Heart right ventricle (tissue), 16 donors: ENCODE measurements at regions of chr4 and their contacts with region 1.

Region 1: GRCh38 chr4:99405433-99406115 is 29.6 kb downstream of the ADH7 start:
- DNase-seq: peak; percentile 12 to 73
- ATAC-seq: peak; percentile 67 to 84 (median 78)
- H3K4me3 ChIP-seq: no peak overlapping the region
- H3K27ac ChIP-seq: peak overlapping the region in 8 of 10 donors; percentile 3 to 67 (median 56)
- H3K4me1 ChIP-seq: peaks cover 0 to 15% (median 8%) of the 10 kb centered on the region in 9 donors
- H3K27me3 ChIP-seq: no peaks in the 10 kb centered on the region
- CTCF ChIP-seq: peak; percentile 79 to 95 (median 94)

Region 2: GRCh38 chr4:98474408-98474844 is 931.1 kb before region 1 on chr4:
- intact Hi-C with region 1: loop called in 3 of 10 experiments (anchors 5 to 10 kb)
- DNase-seq: no peak
- ATAC-seq: no peak
- H3K4me3 ChIP-seq: no peak overlapping the region
- H3K27ac ChIP-seq: no peak overlapping the region
- H3K4me1 ChIP-seq: peaks cover 0 to 5% (median 0%) of the 10 kb centered on the region in 9 donors
- H3K27me3 ChIP-seq: no peaks in the 10 kb centered on the region
- CTCF ChIP-seq: no peak

Region 3: GRCh38 chr4:98928505-98929340 is 476.9 kb before region 1 on chr4 and contains the start of gene EIF4E:
- intact Hi-C with region 1: loop called in 1 of 10 experiments (anchors 1 kb)
- DNase-seq: peak; percentile 97 to 98
- ATAC-seq: peak; percentile 91 to 98 (median 96)
- H3K4me3 ChIP-seq: peak within 1 kb of the TSS; percentile 82 to 97 (median 91)
- H3K27ac ChIP-seq: peak within 1 kb of the TSS; percentile 79 to 96 (median 93)
- H3K4me1 ChIP-seq: peaks cover 0 to 52% (median 24%) of the 10 kb centered on the region in 9 donors
- H3K27me3 ChIP-seq: no peaks in the 10 kb centered on the region
- CTCF ChIP-seq: peak in 6 of 9 donors; percentile 14 to 40 (median 32)
- total RNA-seq, gene EIF4E: 48.7 to 70.4 (median 58.4) TPM

Region 4: DNA sequence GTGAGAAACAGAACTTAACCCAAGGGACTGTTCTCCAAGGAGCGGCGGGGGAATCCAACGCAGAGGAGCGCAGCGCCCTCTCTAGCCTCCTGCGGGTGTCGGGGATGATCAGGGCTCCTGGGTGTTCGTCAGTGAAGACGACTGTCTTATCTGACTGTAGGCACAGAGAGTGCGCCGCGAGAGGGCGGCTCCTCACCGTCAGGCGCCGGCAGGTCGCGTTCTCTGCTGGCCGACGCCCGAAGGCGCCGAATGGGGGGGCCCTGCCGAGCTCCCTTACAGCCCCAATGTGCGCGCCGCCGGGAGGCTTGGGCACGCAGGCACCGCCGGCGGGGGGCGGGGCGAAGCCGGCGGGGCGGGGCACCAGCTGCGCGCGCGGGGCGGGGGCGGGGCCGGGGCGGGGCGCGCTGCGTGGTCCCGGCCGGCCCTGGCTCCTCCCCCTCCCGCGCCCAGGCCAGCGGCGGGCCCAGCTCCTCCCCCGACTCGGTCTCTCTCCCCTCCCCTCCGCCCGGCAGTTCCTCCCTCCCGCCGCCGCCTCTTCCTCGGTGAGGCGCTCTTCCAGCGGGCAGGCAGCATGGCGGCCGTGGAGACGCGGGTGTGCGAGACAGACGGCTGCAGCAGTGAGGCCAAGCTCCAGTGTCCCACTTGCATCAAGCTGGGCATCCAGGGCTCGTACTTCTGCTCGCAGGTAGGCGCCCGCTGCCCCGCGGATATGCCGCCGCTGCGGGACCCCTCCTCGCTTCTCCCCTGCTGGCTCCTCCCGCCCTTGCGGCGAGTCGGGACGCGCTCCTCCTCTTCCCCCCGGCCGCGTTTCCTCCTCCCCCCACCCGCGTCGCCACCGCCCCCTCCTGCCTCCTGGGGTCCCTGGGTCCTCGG is 410.2 kb before region 1 on chr4 and contains the start of gene METAP1:
- intact Hi-C with region 1: loop called in 1 of 10 experiments (anchors 10 kb)
- DNase-seq: peak; percentile 90 to 94
- ATAC-seq: peak; percentile 94 to 98 (median 96)
- H3K4me3 ChIP-seq: peak within 1 kb of the TSS; percentile 73 to 99 (median 96)
- H3K27ac ChIP-seq: peak within 1 kb of the TSS; percentile 86 to 95 (median 93)
- H3K4me1 ChIP-seq: peaks cover 0 to 28% (median 13%) of the 10 kb centered on the region in 9 donors
- H3K27me3 ChIP-seq: no peaks in the 10 kb centered on the region
- CTCF ChIP-seq: peak; percentile 5 to 80 (median 49)
- total RNA-seq, gene METAP1: 54.2 to 79.7 (median 60.9) TPM

Region 5: GRCh38 chr4:99117876-99118693 is 287.5 kb before region 1 on chr4:
- intact Hi-C with region 1: loop called (anchors 1 to 5 kb)
- DNase-seq: no peak
- ATAC-seq: no peak
- H3K4me3 ChIP-seq: no peak overlapping the region
- H3K27ac ChIP-seq: no peak overlapping the region
- H3K4me1 ChIP-seq: no peaks in the 10 kb centered on the region
- H3K27me3 ChIP-seq: no peaks in the 10 kb centered on the region
- CTCF ChIP-seq: peak; percentile 14 to 65 (median 47)

Region 6: DNA sequence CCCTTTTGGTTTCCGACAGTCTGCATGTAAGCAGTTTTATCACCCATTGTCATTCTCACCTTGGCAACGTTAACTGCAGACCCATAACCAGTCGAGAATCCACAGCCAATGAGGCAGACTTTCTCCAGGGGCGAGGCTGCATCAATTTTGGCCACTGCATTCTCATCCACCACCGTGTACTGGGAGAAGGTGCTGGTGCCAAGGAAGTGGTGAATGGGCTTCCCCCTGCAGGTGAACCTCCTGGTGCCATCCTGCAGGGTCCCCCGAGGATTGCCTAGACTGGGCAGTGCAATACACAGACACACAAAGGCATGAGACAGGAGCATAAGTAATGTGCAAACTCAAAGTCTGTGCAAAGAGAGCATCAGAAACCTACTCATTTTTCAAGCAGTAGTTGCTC is 89.7 kb before region 1 on chr4:
- intact Hi-C with region 1: loop called in 1 of 10 experiments (anchors 5 kb)
- DNase-seq: no peak
- ATAC-seq: no peak
- H3K4me3 ChIP-seq: no peak overlapping the region
- H3K27ac ChIP-seq: no peak overlapping the region
- H3K4me1 ChIP-seq: no peaks in the 10 kb centered on the region
- H3K27me3 ChIP-seq: no peaks in the 10 kb centered on the region
- CTCF ChIP-seq: no peak